ENCODE measurements at regions of chr11 and their contacts with region 1.

Region 1: GRCh38 chr11:83819933-83820549 is 533.9 kb upstream of the CCDC90B start:
- DNase-seq: peak; percentile 10 to 43 (median 29)
- ATAC-seq: peak; percentile 83
- H3K4me3 ChIP-seq: no peak overlapping the region
- H3K27ac ChIP-seq: no peak overlapping the region
- H3K4me1 ChIP-seq: no peaks in the 10 kb centered on the region
- H3K27me3 ChIP-seq: no peaks in the 10 kb centered on the region
- CTCF ChIP-seq: peak in 2 of 3 experiments; percentile 28 to 82; a peak in 3 of 6 replicates
- EP300 ChIP-seq: no peak
- POLR2A ChIP-seq: no peak
- RAD21 ChIP-seq: peak; percentile 86 to 88

Region 2: DNA sequence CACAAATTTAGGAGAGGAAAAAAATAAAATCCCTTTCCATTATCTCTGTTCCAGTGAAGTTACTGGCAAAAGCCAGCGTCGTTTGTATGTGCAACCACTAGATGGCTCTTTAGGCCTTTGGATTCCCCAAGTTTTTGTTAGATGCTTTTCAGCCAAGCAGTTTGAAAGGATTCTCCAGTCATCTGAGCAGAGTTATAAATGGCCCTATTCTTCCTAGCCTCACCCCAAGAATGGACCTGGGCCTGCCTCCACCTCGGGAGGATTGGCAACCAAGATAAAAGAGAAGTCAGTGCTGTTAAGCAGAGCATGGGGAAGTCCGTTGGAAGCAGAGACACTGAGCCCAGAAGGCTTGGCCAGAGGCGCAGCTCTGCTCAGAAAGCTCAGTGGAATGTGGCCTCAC is 1101.7 kb before region 1 on chr11:
- CTCF ChIA-PET with region 1: interaction called, 3 read pairs
- POLR2A ChIA-PET with region 1: no interaction called
- in situ Hi-C with region 1: no loop called
- intact Hi-C with region 1: loop called (anchors 5 kb)
- DNase-seq: peak; percentile 37 to 59 (median 48)
- ATAC-seq: peak; percentile 86
- H3K4me3 ChIP-seq: no peak overlapping the region
- H3K27ac ChIP-seq: no peak overlapping the region
- H3K4me1 ChIP-seq: no peaks in the 10 kb centered on the region
- H3K27me3 ChIP-seq: peaks cover 5 to 14% of the 10 kb centered on the region in 2 experiments
- CTCF ChIP-seq: peak; percentile 73 to 91 (median 79)
- EP300 ChIP-seq: no peak
- POLR2A ChIP-seq: no peak
- RAD21 ChIP-seq: peak; percentile 90

Region 3: GRCh38 chr11:82900277-82901164 is 919.5 kb before region 1 on chr11 and contains the start of gene PRCP:
- CTCF ChIA-PET with region 1: interaction called, 14 read pairs
- POLR2A ChIA-PET with region 1: no interaction called
- in situ Hi-C with region 1: no loop called
- intact Hi-C with region 1: loop called (anchors 10 kb)
- DNase-seq: peak; percentile 87 to 94 (median 90)
- ATAC-seq: peak; percentile 92
- H3K4me3 ChIP-seq: peak within 1 kb of the TSS; percentile 69
- H3K27ac ChIP-seq: peak within 1 kb of the TSS; percentile 77
- H3K4me1 ChIP-seq: peaks cover 8 to 24% of the 10 kb centered on the region in 2 experiments
- H3K27me3 ChIP-seq: no peaks in the 10 kb centered on the region
- CTCF ChIP-seq: 0 out of 6 replicates have a peak, but pooled peaks of 1 of the 3 experiments have one; percentile 5
- EP300 ChIP-seq: peak; percentile 21; the same call in 1 of the 2 replicates
- POLR2A ChIP-seq: peak; percentile 86
- RAD21 ChIP-seq: no peak
- polyA plus RNA-seq, gene PRCP: 28.5 to 34.9 TPM

Region 4: DNA sequence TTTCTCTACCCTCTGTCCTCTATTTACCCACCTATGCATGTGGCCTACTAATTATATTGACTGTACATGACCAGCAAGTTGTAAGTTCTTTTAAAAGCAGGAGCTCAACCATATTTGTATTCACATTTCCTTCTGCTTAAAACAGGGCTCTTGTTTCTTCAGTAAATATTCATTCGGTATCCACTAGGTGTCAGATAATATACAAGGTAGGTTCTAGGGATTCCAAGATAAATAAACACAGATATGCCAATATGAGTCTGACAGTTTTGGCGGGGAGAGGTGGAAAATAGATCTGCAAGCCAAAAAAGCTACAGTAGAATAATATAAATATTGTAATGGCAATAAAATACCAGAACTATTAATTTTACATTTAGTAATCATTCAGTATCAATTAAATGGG is 733.0 kb before region 1 on chr11:
- CTCF ChIA-PET with region 1: no interaction called
- POLR2A ChIA-PET with region 1: no interaction called
- in situ Hi-C with region 1: loop called (anchors 25 kb)
- intact Hi-C with region 1: loop called (anchors 10 kb)
- DNase-seq: no peak
- ATAC-seq: peak; percentile 56; the same call in 2 of the 3 replicates
- H3K4me3 ChIP-seq: no peak overlapping the region
- H3K27ac ChIP-seq: no peak overlapping the region
- H3K4me1 ChIP-seq: peaks cover 6 to 9% of the 10 kb centered on the region in 2 experiments; a peak in 3 of 5 replicates
- H3K27me3 ChIP-seq: no peaks in the 10 kb centered on the region
- CTCF ChIP-seq: peak; percentile 6 to 45 (median 13); a peak in 2 of 6 replicates
- EP300 ChIP-seq: no peak
- POLR2A ChIP-seq: no peak
- RAD21 ChIP-seq: peak; percentile 31 to 54; a peak in 3 of 4 replicates

Region 5: GRCh38 chr11:83292709-83293456 is 527.2 kb before region 1 on chr11:
- CTCF ChIA-PET with region 1: no interaction called
- POLR2A ChIA-PET with region 1: no interaction called
- in situ Hi-C with region 1: no loop called
- intact Hi-C with region 1: loop called (anchors 2 kb)
- DNase-seq: peak; percentile 35 to 67 (median 45)
- ATAC-seq: peak; percentile 85
- H3K4me3 ChIP-seq: no peak overlapping the region
- H3K27ac ChIP-seq: no peak overlapping the region
- H3K4me1 ChIP-seq: no peaks in the 10 kb centered on the region; a peak in 1 of 5 replicates
- H3K27me3 ChIP-seq: peaks cover 0 to 5% of the 10 kb centered on the region in 2 experiments; a peak in 4 of 5 replicates
- CTCF ChIP-seq: peak; percentile 57 to 74 (median 64)
- EP300 ChIP-seq: no peak
- POLR2A ChIP-seq: no peak
- RAD21 ChIP-seq: peak; percentile 46 to 55

Region 6: GRCh38 chr11:83951474-83951873 is 131.4 kb after region 1 on chr11:
- CTCF ChIA-PET with region 1: no interaction called
- POLR2A ChIA-PET with region 1: no interaction called
- in situ Hi-C with region 1: no loop called
- intact Hi-C with region 1: no loop called
- DNase-seq: no peak
- ATAC-seq: no peak
- H3K4me3 ChIP-seq: no peak overlapping the region
- H3K27ac ChIP-seq: no peak overlapping the region
- H3K4me1 ChIP-seq: no peaks in the 10 kb centered on the region
- H3K27me3 ChIP-seq: no peaks in the 10 kb centered on the region
- CTCF ChIP-seq: no peak
- EP300 ChIP-seq: no peak
- POLR2A ChIP-seq: no peak
- RAD21 ChIP-seq: no peak

Measured in K562 (cell line).